Activated CD4-positive, alpha-beta memory T cell treated with anti-CD3 and anti-CD28 coated beads, Interleukin-2, amount 10 ng/mL, durations not matched to agents 7 days and 5 days (primary cell): ENCODE measurements at regions of chr11 and their contacts with region 1.

Region 1: DNA sequence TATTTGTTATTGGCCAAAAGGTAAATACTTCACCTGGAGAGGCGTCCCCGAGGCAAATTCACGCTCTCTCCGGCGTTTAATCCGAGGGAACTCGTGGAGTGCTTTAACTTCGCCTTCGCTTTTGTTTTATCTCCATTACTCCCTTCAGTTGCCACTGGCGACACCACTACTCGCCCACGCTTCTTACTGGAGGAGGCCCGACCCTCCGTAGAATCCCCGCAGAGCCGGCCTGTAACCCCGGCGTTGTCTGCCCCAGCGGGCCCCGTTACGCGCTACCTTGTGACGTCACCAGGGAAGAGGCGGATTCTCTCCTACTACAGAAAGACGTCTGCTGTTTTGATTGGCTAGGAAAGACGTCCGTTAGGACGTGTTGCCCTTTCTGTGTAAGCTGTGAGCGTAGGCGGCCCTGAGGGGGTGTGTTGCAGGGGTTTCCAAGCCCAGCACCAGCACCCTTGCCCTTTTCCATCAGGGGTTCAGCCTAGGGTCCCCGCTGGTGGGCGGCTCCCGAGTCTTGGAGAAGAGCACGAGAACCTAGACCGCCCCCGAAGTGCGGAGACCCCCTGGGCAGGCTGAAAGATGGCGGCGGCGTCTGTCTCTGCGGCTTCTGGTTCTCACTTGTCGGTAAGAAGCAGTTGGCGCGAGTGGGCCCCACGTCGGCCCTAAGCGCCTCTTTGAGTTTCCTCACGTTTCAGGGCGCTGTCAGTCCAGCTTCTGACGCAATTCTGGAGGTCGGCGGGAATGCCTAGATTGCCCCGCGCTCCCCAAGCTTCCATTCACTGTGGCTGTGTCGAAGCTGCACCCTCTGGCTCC is at the start of gene CEP57:
- DNase-seq: peak; percentile 95
- H3K4me3 Mint-ChIP-seq: peak within 1 kb of the TSS; percentile 97
- H3K27ac Mint-ChIP-seq: peak within 1 kb of the TSS; percentile 100
- H3K4me1 Mint-ChIP-seq: peaks cover 61% of the 10 kb centered on the region
- H3K27me3 Mint-ChIP-seq: no peaks in the 10 kb centered on the region
- total RNA-seq, gene CEP57: 102 to 105 TPM

Region 2: DNA sequence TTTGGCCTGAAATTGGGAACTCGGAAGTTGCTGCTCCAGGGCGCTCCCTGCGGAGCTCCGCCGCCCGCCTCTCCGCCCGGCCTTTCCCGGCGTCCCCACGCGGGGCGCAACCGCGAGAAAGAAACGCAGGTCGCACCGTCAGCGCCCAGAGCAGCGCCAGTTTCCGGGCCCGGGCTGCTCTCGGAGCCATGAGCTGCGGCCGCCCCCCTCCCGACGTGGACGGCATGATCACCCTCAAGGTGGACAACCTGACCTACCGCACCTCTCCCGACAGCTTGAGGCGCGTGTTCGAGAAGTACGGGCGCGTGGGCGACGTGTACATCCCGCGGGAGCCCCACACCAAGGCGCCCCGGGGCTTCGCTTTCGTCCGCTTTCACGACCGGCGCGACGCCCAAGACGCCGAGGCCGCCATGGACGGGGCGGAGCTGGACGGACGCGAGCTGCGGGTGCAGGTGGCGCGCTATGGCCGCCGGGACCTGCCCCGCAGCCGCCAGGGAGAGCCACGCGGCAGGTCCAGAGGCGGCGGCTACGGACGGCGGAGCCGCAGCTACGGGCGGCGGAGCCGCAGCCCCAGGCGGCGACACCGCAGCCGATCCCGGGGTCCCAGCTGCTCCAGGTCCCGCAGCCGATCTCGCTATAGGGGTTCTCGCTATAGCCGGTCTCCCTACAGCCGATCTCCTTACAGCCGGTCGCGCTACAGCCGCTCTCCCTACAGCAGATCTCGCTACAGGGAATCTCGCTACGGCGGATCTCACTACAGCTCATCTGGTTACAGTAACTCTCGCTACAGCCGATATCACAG is 723.1 kb before region 1 on chr11:
- CTCF ChIA-PET with region 1: interaction called, 16 read pairs
- POLR2A ChIA-PET with region 1: interaction called, 83 read pairs
- DNase-seq: peak; percentile 76
- H3K4me3 Mint-ChIP-seq: peak overlapping the region; percentile 92
- H3K27ac Mint-ChIP-seq: peak overlapping the region; percentile 94
- H3K4me1 Mint-ChIP-seq: peaks cover 25% of the 10 kb centered on the region
- H3K27me3 Mint-ChIP-seq: peaks cover under 1% of the 10 kb centered on the region

Region 3: GRCh38 chr11:95231127-95231880 is 559.0 kb before region 1 on chr11 and contains the start of gene SESN3:
- CTCF ChIA-PET with region 1: interaction called, 6 read pairs
- POLR2A ChIA-PET with region 1: interaction called, 55 read pairs
- DNase-seq: peak; percentile 99
- H3K4me3 Mint-ChIP-seq: no peak within 1 kb of the TSS
- H3K27ac Mint-ChIP-seq: peak within 1 kb of the TSS; percentile 79
- H3K4me1 Mint-ChIP-seq: peaks cover 36% of the 10 kb centered on the region
- H3K27me3 Mint-ChIP-seq: peaks cover 12% of the 10 kb centered on the region
- total RNA-seq, gene SESN3: 23.2 to 24.6 TPM

Region 4: GRCh38 chr11:95778699-95779098 is 11.6 kb before region 1 on chr11:
- CTCF ChIA-PET with region 1: interaction called, 3 read pairs
- POLR2A ChIA-PET with region 1: interaction called, 41 read pairs
- DNase-seq: no peak
- H3K4me3 Mint-ChIP-seq: no peak overlapping the region
- H3K27ac Mint-ChIP-seq: no peak overlapping the region
- H3K4me1 Mint-ChIP-seq: peaks cover 36% of the 10 kb centered on the region
- H3K27me3 Mint-ChIP-seq: no peaks in the 10 kb centered on the region

Region 5: DNA sequence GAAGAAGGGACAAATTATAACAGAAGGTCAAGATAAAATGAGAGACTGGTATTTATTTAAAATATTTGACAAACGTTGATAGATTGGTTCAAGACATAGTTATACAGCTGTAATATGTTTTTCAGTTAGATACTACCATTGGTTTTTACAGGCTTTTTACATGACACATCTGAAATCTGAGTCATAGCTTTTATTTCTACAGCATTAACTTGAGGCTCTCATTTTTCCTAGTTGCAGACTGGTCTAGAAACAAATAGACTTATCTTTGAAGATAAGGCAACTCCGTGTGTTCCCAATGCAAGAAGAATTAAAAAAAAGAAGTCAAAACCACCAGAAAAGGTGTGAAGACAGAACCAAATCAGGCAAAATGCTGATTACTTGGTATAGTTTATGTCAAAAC is 31.3 kb after region 1 on chr11:
- CTCF ChIA-PET with region 1: no interaction called
- POLR2A ChIA-PET with region 1: no interaction called
- DNase-seq: no peak
- H3K4me3 Mint-ChIP-seq: no peak overlapping the region
- H3K27ac Mint-ChIP-seq: no peak overlapping the region
- H3K4me1 Mint-ChIP-seq: no peaks in the 10 kb centered on the region
- H3K27me3 Mint-ChIP-seq: no peaks in the 10 kb centered on the region

Region 6: DNA sequence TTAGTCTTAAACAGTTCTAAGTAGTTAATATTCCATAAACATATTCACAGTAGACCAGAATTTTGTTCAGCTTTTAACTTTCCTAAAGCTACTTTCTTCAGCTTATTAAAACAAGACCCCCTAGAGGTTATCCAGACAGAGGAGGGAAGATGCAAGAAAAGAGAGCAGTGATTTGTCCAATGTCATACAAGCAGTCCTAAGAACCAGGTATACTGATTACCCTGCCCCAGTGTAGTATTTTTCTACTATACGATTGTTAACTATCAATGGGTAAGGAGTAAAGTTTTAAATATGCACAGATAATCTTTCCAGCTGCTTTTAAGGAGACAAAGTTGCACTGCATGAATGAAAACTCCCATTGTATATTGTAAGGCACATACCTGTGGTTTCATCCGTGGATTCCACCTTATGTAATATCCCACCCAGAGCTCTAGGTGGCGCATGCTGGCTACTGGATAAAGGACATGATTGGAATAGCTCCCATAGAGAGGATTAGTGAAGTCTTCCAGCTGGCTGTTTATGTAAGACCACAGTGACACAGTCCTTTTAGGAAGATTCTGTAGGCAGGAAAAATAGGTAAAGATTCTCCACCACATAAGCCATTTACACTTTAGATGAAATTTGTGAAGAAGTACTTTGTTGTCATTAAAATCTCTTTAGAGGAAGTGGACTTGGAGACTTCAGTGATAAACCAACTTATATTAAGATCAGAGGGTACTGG is 45.6 kb after region 1 on chr11:
- CTCF ChIA-PET with region 1: interaction called, 10 read pairs
- POLR2A ChIA-PET with region 1: interaction called, 10 read pairs
- DNase-seq: peak; percentile 57
- H3K4me3 Mint-ChIP-seq: no peak overlapping the region
- H3K27ac Mint-ChIP-seq: no peak overlapping the region
- H3K4me1 Mint-ChIP-seq: no peaks in the 10 kb centered on the region
- H3K27me3 Mint-ChIP-seq: no peaks in the 10 kb centered on the region

Region 7: GRCh38 chr11:96242971-96243647 is 452.8 kb after region 1 on chr11:
- CTCF ChIA-PET with region 1: no interaction called
- POLR2A ChIA-PET with region 1: interaction called, 15 read pairs
- DNase-seq: peak; percentile 78
- H3K4me3 Mint-ChIP-seq: peak overlapping the region; percentile 70
- H3K27ac Mint-ChIP-seq: peak overlapping the region; percentile 79
- H3K4me1 Mint-ChIP-seq: peaks cover 54% of the 10 kb centered on the region
- H3K27me3 Mint-ChIP-seq: no peaks in the 10 kb centered on the region